RWPE1 (cell line): ENCODE measurements at regions of chr9 and their contacts with region 1.

Region 1: DNA sequence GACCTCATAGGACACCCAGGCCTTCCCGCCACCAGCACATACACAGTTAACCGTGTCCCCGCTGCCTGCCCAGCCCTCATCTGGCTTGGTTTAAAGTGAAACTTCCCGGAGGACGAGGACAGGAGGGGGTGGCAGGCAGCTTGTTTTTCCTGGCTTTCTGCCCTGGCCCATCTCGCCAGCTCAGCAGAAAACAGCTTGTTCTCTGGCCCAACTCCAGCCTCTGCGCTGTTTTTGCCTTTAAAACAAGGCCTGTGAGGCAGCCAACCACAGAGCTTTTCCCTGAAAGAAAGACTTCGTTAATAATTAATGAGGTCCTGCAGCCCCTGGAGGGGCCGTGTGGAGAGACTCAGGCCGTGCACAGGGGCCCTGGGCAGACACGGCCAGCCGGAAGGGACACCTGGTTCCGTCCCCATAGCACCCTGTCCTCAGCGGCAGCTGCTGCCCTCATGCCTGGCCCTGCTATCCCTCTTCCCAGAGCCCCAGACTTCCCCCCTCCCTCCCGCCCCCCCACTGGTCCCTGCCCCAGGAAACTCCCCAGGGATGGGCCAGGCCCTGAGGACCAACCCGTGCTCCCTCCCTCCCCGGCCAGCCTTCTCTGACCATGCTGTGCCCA is 108.7 kb downstream of the RXRA start:
- DNase-seq: peak; percentile 90
- H3K27ac ChIP-seq: peak overlapping the region; percentile 100
- CTCF ChIP-seq: no peak

Region 2: DNA sequence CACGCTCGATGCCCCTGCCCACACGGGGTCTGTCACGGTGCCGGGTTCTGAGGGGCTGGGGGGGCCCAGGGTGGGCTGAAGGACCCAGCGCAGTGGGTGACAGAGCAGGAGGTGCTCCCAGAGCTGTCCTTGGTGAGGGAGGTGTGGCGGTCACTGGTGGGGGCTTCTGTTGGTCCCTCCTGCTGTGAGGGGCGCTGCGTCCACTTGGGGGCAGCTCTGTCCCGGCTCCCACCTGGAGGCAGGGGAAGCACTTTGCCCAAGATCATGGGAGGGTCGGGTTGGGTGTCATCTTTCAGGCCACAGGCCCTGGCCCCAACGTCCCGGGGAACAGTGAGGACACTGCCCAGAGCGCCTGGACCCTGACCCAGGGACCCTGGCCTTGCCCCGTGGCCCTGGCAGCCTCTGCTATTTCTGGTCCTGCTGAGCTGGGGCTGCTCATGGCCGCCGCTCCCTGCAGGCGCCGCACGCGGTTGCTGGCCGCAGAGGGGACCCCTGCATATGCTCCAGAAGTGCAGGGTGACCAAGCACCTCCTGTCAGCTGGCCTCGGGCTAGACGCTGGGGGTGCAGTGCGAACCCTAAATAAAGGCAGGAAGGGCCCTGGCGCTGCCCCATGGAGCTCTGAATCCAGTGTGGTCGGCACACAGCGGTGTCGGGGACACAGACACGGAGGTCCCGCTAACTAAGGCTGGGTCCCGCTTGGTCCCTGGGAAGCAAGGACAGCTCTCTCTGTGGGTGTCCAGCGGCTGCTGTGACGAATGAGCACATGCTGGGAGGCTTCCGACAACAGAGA is 259.0 kb before region 1 on chr9:
- CTCF ChIA-PET with region 1: interaction called, 10 read pairs
- POLR2A ChIA-PET with region 1: interaction called, 3 read pairs
- DNase-seq: no peak
- H3K27ac ChIP-seq: no peak overlapping the region
- CTCF ChIP-seq: no peak; the same call in 1 of the 2 replicates

Region 3: GRCh38 chr9:134423749-134424148 is 11.3 kb before region 1 on chr9:
- CTCF ChIA-PET with region 1: interaction called, 6 read pairs
- POLR2A ChIA-PET with region 1: interaction called, 11 read pairs
- DNase-seq: no peak
- H3K27ac ChIP-seq: peak overlapping the region; percentile 97
- CTCF ChIP-seq: no peak